ENCODE measurements at regions of chr17 and their contacts with region 1.

Region 1: DNA sequence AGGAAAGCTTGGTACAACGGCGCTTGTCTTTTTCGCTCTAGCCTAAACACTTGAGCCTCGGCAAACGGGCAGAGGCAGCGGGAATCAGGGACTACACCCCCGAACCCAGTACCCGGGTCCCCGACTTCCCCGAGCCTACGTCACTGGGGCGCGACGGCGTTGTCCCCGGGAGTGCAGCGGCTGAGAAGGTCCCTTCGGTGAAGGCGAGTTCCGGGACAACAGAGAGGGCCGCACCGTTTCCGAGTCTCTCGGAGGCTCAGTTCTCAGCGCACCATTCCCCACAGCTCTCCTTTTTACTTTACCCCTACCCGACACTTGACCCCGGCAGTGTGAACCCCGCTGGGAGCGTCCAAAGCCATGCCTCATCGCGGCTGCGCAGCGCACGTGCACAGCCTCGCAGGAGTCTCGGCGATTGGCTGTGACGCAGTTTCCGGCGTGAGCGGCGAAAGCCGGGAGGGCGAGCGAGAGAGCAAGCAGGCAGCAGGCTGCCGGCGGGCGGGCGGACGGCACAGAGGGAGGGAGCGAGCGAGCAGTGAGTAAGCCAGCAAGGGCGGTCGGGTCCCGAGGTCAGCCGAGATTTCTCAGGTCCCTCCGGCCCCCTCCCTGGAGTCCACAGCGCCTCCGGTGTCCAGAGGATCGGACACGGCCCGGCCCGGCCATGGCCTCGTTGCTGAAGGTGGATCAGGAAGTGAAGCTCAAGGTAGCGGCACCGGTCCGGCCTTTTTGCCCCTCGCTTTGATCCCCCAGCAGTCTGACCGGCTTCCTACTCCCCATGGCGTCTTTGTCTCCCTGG is at the start of gene PSME3:
- DNase-seq: peak; percentile 79 to 83
- ATAC-seq: peak; percentile 95 to 97
- H3K4me3 ChIP-seq: peak within 1 kb of the TSS; percentile 77 to 97 (median 96)
- H3K27ac ChIP-seq: peak within 1 kb of the TSS; percentile 80 to 94 (median 89)
- H3K4me1 ChIP-seq: peaks cover 18 to 27% of the 10 kb centered on the region in 2 donors
- H3K27me3 ChIP-seq: no peaks in the 10 kb centered on the region
- CTCF ChIP-seq: peak in 1 of 5 experiments; percentile 34
- POLR2A ChIP-seq: peak; percentile 96 to 98
- total RNA-seq, gene PSME3: 84.2 to 101 (median 88.7) TPM

Region 2: GRCh38 chr17:43393944-43394482 is 560.8 kb after region 1 on chr17:
- in situ Hi-C with region 1: no loop called
- intact Hi-C with region 1: loop called (anchors 10 kb)
- DNase-seq: peak; percentile 81 to 88
- ATAC-seq: peak; percentile 61 to 64
- H3K4me3 ChIP-seq: peak overlapping the region; percentile 16 to 44 (median 32)
- H3K27ac ChIP-seq: peak overlapping the region; percentile 39 to 77 (median 48)
- H3K4me1 ChIP-seq: peaks cover 3 to 14% of the 10 kb centered on the region in 2 donors
- H3K27me3 ChIP-seq: no peaks in the 10 kb centered on the region
- CTCF ChIP-seq: peak; percentile 91 to 97 (median 94)
- POLR2A ChIP-seq: no peak

Measured in gastrocnemius medialis (tissue), 4 donors.